BJ (cell line): ENCODE measurements at regions of chr20 and their contacts with region 1.

Region 1: GRCh38 chr20:46363800-46364634 is 42.4 kb downstream of the ELMO2 start:
- DNase-seq: peak; percentile 35
- H3K4me3 ChIP-seq: peak overlapping the region; percentile 95
- H3K27me3 ChIP-seq: no peaks in the 10 kb centered on the region
- CTCF ChIP-seq: no peak

Region 2: DNA sequence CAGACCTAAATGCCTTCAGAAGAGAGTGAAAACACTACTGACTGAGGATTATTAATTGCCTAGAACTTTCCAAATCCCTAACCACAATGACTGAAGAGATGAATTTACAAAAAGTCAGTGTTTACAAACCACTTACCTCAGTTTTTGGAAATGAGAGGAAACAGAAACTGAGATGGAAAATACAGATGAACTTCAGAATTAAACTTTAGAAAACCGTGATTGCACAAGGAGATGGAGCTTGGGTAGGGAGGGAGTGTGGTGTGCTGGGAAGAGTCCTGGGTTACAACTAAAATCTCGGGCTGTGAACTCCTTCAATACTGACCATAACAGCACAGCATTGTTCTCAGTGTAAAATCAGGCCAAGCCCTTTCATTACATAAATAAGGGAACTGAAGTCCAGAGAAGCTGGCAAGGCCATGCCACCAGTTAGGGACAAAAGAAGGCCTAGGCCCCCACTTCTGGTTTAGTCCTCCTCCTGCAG is 38.4 kb after region 1 on chr20:
- CTCF ChIA-PET with region 1: interaction called, 5 read pairs
- POLR2A ChIA-PET with region 1: interaction called, 11 read pairs
- DNase-seq: no peak
- H3K4me3 ChIP-seq: no peak overlapping the region
- H3K27me3 ChIP-seq: no peaks in the 10 kb centered on the region
- CTCF ChIP-seq: no peak

Region 3: DNA sequence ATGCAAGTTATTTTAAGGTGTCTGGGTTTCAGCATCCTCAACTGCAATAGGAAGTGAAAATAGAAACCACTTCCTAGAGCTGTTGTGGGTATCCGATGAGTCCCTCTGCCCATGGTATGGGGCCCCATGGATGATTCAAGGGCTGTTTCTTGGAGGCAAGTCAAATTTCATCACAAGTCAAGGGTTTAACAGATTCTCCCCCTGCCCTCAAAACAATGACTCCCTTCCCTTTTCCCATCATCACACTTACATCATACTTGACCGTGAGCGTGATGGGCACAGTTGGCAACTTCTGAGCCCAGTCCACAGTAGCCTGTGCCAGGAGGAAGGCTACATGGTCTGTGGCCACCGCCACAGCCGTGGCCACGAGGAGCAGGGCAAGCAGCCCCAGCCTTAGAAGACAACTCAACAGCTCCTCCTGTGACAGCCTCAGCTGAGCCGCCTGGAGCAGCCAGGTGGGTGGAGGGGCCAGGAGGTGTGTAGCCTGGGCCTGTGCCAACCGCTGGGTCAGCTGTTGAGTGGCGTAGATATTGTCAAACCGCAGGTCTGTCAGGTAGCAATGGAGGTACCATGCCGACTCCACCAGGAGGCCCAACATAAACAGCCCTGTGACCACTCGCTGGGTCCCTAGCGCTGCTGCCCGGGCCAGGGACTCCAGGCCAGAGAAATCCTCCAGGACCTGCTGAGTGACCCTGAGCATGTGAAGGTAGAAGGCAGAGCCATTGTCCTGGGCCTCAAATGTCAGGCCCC is 181.2 kb after region 1 on chr20:
- CTCF ChIA-PET with region 1: no interaction called
- POLR2A ChIA-PET with region 1: interaction called, 18 read pairs
- DNase-seq: no peak
- H3K4me3 ChIP-seq: no peak overlapping the region
- H3K27me3 ChIP-seq: peaks cover 5% of the 10 kb centered on the region
- CTCF ChIP-seq: no peak

Region 4: DNA sequence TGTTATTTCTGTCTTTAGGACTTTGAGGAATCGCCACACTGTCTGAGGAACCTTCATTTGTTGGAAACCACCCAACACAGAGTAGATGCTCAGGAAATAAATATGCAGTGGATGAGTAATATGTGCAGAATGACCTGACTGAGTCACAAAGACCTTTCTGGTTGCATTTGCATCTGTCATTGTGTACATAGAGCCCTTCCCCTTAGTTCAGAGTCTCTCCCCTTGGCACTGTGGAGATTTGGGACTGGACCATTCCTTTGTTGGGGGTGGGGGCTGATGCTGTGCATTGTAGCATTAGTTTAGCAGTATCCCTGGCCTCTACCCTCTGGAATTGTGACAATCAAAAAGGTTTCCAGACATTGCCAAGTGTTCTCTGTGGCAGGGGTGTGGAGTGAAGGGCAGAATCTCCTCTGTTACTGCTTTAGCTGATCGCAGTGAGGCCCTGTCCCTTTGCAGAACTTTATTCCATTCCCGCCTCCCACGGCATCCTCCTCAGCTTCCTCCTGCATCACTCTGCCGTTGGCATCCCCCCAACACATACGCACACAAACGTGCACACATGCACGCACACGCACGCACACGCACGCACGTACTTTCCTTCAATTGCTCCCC is 595.2 kb after region 1 on chr20:
- CTCF ChIA-PET with region 1: no interaction called
- POLR2A ChIA-PET with region 1: no interaction called
- DNase-seq: peak; percentile 77
- H3K4me3 ChIP-seq: no peak overlapping the region
- H3K27me3 ChIP-seq: no peaks in the 10 kb centered on the region; the same call in 1 of the 2 replicates
- CTCF ChIP-seq: no peak